SK-N-SH (cell line): ENCODE measurements at regions of chr11 and their contacts with region 1.

Region 1: DNA sequence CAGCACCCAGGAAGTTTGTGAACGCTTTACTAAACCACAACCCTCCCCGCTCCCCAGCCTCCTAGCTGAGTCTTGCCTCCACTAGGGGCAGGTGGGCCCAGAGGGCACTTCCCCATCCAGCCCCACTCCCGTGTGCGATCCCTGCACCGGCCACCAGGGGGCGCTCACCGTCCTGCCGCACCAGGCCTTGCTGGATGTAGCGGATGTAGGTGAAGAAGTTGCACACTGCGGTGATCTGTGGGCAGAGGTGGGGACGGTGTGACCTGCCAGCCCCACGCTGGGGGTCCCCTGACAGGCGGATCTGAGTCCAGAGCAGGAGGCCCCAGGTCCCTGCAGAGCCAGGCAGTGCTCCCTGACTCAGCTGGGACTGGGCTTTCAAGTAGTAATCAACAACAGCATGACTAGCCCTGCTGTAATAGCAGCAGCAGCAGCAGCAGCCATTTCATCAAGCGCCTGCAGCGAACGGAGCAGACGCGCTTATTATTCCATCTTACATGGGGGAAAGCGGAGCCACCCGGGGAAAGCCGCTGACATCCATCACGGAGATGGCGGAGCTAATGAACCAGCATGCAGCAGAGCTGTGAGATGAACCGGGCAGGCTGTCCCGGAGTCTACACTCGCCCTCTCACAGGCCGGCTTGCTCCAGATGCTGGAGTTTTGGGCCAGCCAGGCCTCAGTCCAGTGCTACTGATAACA is 7.9 kb upstream of the FADS3 start:
- DNase-seq: peak; percentile 97
- H3K4me3 ChIP-seq: peak overlapping the region in 1 of 2 experiments; percentile 44; a peak in 1 of 4 replicates
- H3K27ac ChIP-seq: no peak overlapping the region
- H3K4me1 ChIP-seq: no peaks in the 10 kb centered on the region
- H3K27me3 ChIP-seq: no peaks in the 10 kb centered on the region
- CTCF ChIP-seq: peak; percentile 98
- EP300 ChIP-seq: no peak
- RAD21 ChIP-seq: peak; percentile 89

Region 2: GRCh38 chr11:61567286-61568061 is 331.8 kb before region 1 on chr11:
- CTCF ChIA-PET with region 1: no interaction called
- POLR2A ChIA-PET with region 1: no interaction called
- DNase-seq: peak; percentile 63
- H3K4me3 ChIP-seq: no peak overlapping the region; a peak in 1 of 4 replicates
- H3K27ac ChIP-seq: no peak overlapping the region; a peak in 1 of 4 replicates
- H3K4me1 ChIP-seq: peaks cover 0 to 79% of the 10 kb centered on the region in 2 experiments; a peak in 1 of 4 replicates
- H3K27me3 ChIP-seq: no peaks in the 10 kb centered on the region; the same call in 1 of the 2 replicates
- CTCF ChIP-seq: no peak; the same call in none of the 2 replicates
- EP300 ChIP-seq: no peak
- RAD21 ChIP-seq: no peak

Region 3: GRCh38 chr11:61803889-61804647 is 95.2 kb before region 1 on chr11:
- CTCF ChIA-PET with region 1: interaction called, 62 read pairs
- POLR2A ChIA-PET with region 1: no interaction called
- DNase-seq: no peak
- H3K4me3 ChIP-seq: no peak overlapping the region
- H3K27ac ChIP-seq: no peak overlapping the region
- H3K4me1 ChIP-seq: no peaks in the 10 kb centered on the region
- H3K27me3 ChIP-seq: no peaks in the 10 kb centered on the region
- CTCF ChIP-seq: no peak
- EP300 ChIP-seq: no peak
- RAD21 ChIP-seq: no peak

Region 4: GRCh38 chr11:61879711-61880430 is 19.4 kb before region 1 on chr11:
- CTCF ChIA-PET with region 1: interaction called, 91 read pairs
- POLR2A ChIA-PET with region 1: no interaction called
- DNase-seq: no peak
- H3K4me3 ChIP-seq: no peak overlapping the region
- H3K27ac ChIP-seq: no peak overlapping the region
- H3K4me1 ChIP-seq: peaks cover 0 to 4% of the 10 kb centered on the region in 2 experiments; a peak in 1 of 4 replicates
- H3K27me3 ChIP-seq: no peaks in the 10 kb centered on the region
- CTCF ChIP-seq: no peak
- EP300 ChIP-seq: no peak
- RAD21 ChIP-seq: no peak

Region 5: DNA sequence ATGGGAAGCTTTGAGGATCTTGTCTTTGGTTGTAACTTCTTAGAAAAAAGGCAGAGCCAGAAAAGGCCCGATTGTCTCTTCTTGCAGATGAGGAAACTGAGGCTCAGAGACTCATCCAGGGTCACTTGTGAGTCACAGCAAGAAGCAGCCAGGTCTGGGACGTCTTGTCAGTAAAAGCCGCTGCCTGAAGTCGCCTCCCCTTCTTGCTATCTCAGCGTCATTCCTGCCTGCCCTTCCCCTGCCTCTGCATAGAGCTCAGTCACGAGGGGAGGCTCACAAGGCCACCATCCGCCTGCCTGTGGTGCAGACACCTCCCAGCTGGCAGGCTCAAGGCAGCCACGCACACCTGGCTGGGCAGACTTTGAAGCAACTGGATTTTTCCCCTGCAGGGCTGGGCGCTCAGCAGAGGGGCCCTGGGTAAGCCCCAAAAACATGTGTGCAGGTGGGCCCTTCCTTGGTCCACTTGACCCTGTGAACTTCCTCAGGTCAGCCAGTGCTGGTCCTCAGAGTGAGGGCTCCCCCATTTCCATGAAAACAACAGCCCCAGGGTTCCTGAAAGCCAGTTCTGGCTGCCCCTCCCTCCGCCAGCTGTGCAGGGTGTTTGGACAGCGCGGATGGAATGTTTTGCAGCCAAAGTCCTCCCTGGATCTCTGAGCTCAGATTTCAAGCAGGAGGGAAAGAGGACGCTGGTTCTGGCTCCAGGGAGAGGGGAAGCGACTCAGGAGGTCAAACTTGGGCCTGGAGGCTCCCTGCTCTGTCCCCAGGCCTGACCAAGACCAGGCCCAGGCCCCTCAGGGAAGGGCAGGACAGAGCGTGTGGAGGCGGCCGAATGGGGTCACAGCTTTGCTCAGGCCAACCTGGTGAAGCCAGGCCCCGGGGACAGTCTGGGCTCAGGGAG is 24.1 kb after region 1 on chr11:
- CTCF ChIA-PET with region 1: interaction called, 106 read pairs
- POLR2A ChIA-PET with region 1: interaction called, 3 read pairs
- DNase-seq: peak; percentile 61
- H3K4me3 ChIP-seq: no peak overlapping the region
- H3K27ac ChIP-seq: peak overlapping the region; percentile 49 to 93; a peak in 2 of 4 replicates
- H3K4me1 ChIP-seq: peaks cover 20 to 34% of the 10 kb centered on the region in 2 experiments
- H3K27me3 ChIP-seq: no peaks in the 10 kb centered on the region
- CTCF ChIP-seq: no peak
- EP300 ChIP-seq: no peak
- RAD21 ChIP-seq: no peak

Region 6: DNA sequence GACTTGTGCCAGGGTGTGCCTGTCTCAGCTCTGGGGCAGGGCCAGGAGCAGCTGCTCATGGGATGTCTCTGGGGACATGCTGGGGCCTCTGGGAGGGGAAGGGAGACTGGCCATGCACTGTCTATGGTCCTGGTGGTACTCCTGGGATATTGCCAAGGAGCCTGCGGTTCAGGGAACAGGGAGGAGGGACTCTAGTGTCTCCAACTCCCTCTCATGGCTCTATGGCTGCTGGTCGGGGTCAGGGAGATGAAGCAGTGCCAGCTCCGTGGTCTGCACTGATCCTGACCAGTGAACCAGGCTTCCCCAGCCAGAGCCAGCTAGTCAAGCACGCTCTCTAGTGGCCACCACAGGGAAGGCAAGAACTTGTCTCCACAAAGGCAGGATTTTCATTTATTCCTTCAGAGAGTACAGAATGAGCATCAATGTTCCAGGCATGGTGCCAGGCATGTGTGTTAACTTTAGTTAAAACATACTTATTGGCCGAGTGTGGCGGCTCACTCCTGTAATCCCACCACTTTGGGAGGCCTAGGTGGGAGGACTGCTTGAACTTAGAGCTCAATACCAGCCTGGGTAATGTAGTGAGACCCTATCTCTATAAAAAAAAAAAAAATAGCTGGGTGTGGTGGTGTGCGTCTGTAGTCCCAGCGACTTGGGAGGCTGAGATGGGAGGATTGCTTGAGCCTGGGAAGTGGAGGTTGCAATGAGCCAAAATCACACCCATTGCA is 48.4 kb after region 1 on chr11:
- CTCF ChIA-PET with region 1: interaction called, 543 read pairs
- POLR2A ChIA-PET with region 1: interaction called, 11 read pairs
- DNase-seq: peak; percentile 87
- H3K4me3 ChIP-seq: no peak overlapping the region
- H3K27ac ChIP-seq: no peak overlapping the region; a peak in 1 of 4 replicates
- H3K4me1 ChIP-seq: peaks cover 11 to 18% of the 10 kb centered on the region in 2 experiments; a peak in 2 of 4 replicates
- H3K27me3 ChIP-seq: no peaks in the 10 kb centered on the region
- CTCF ChIP-seq: peak; percentile 95
- EP300 ChIP-seq: no peak
- RAD21 ChIP-seq: peak; percentile 100

Region 7: DNA sequence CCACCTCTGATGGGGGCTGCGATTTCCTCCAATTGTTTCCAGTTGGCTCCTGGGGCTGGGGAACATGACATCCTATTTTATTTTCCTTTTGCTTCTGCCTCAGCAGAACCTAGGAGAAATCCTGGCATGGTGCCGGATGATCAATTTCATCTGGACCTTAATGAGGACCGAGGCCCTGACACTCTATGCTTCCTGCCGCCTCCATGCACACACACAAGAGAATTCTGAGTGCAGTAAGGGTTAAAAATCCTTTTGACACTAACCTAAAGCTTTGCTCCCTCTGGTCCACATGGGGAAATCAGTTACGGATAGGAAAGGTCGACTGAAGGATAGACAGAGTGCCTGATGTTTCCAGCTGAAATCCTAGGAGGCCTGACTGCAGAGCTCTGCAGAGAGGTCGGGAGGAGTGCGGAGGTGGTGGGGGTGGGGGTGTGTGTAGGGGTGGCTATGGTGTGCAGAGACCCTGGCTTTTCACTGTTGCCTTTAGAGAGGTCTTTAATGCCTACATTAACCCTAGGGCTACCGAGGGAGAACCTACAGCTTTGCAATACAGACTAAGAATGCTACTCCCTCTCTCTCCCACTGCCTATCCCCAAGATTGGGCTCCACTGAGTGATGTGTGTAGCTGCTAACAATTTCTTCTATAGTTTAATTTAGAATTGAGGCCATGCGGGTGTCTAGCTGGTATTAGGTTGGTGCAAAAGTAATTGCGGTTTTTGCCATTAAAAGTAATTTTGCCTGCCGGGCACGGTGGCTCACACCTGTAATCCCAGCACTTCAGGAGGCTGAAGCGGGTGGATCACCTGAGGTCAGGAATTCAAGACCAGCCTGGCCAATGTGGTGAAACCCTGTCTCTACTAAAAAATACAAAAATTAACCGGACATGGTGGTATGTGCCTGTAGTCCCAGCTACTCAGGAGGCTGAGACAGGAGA is 171.0 kb after region 1 on chr11:
- CTCF ChIA-PET with region 1: interaction called, 11 read pairs
- POLR2A ChIA-PET with region 1: no interaction called
- DNase-seq: no peak
- H3K4me3 ChIP-seq: no peak overlapping the region
- H3K27ac ChIP-seq: no peak overlapping the region
- H3K4me1 ChIP-seq: no peaks in the 10 kb centered on the region
- H3K27me3 ChIP-seq: no peaks in the 10 kb centered on the region
- CTCF ChIP-seq: no peak
- EP300 ChIP-seq: no peak
- RAD21 ChIP-seq: no peak